ENCODE measurements at regions of chr6 and their contacts with region 1.

Region 1: GRCh38 chr6:24902782-24903181 is 33.0 kb downstream of the RIPOR2 start:
- DNase-seq: no peak
- ATAC-seq: no peak
- H3K4me3 Mint-ChIP-seq: no peak overlapping the region
- H3K27ac Mint-ChIP-seq: peak overlapping the region; percentile 78
- H3K4me1 Mint-ChIP-seq: peaks cover 92% of the 10 kb centered on the region
- H3K27me3 Mint-ChIP-seq: no peaks in the 10 kb centered on the region

Region 2: GRCh38 chr6:24228681-24229255 is 674.0 kb before region 1 on chr6:
- CTCF ChIA-PET with region 1: no interaction called
- POLR2A ChIA-PET with region 1: no interaction called
- intact Hi-C with region 1: no loop called
- DNase-seq: no peak
- ATAC-seq: peak; percentile 49
- H3K4me3 Mint-ChIP-seq: no peak overlapping the region
- H3K27ac Mint-ChIP-seq: no peak overlapping the region
- H3K4me1 Mint-ChIP-seq: no peaks in the 10 kb centered on the region
- H3K27me3 Mint-ChIP-seq: peaks cover 22% of the 10 kb centered on the region

Region 3: DNA sequence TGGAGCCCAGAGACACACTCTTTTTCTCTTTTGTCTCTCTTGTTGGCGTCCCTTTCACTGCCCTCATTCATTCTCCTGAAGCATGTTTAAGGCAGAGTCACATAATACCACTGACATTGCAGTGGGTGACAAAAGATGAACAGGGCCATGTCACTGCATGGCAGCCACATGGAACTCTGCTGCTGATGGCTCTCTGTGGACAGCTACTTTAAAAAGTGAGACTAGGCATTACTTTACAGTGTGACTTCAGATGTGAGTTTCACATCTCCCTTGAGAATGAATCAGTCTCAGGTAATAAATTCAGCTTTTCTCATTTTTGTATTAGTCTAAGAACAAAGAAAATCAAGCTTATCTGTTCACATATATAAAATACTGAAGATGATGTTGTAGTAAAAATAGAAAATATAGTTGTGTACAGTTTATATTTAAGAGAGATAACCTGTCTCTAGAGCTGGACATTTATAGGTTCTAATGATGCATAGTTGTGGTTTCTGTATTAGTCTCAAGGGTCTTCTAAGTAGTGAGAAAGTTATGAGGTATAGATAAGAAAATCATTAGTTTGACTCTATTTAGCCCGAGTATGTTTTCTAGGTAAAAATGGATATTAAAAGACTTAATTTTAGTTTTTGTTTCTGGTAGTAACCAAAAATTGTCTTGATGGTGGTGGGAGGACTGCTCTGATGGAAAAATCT is 493.9 kb before region 1 on chr6:
- CTCF ChIA-PET with region 1: no interaction called
- POLR2A ChIA-PET with region 1: no interaction called
- intact Hi-C with region 1: no loop called
- DNase-seq: no peak
- ATAC-seq: no peak
- H3K4me3 Mint-ChIP-seq: no peak overlapping the region
- H3K27ac Mint-ChIP-seq: no peak overlapping the region
- H3K4me1 Mint-ChIP-seq: peaks cover 16% of the 10 kb centered on the region
- H3K27me3 Mint-ChIP-seq: no peaks in the 10 kb centered on the region

Region 4: DNA sequence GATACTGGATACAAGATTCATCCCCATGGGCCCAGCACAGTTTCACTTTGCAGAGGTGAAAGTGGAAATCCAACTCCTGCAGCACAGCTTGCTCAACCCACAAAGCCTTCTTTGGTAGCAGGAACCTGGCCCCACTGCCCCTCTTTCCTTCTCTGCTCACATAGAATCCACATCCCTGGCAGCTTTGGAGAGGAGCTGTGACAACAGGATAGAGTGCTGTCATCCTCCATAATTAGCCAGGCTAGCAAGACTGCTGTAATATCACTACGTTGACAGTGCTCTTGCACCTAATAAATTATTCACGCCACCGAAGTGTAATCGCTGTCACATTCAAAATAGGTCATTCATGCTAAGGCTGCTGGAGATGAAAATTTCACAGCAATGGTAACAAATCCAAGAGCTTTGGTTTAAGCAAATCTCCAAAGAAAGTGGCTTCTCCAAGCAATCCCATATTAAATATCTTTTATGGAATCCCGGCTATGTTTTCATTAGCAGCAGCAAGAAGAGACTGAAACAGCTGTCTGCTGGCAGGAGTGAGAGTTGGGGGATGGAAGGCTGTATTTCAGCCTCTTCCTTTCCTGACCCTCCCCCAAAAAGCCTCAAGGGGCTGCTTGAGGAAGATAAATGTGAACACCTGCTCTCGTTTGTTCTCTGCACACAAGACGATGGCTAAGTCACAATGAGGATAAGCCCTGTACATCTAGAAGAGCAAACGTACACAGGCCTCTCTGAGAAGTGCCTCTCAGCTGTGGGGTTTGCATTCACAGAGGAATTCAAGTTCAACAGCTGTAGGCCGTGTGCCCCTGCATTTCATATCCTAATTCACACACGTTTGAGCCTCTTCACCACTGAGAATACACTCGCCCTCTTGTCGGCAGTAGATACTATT is 16.5 kb after region 1 on chr6:
- CTCF ChIA-PET with region 1: interaction called, 13 read pairs
- POLR2A ChIA-PET with region 1: interaction called, 3 read pairs
- intact Hi-C with region 1: no loop called
- DNase-seq: peak; percentile 52
- ATAC-seq: peak; percentile 21
- H3K4me3 Mint-ChIP-seq: peak overlapping the region; percentile 55
- H3K27ac Mint-ChIP-seq: peak overlapping the region; percentile 94
- H3K4me1 Mint-ChIP-seq: peaks cover 89% of the 10 kb centered on the region
- H3K27me3 Mint-ChIP-seq: no peaks in the 10 kb centered on the region